ENCODE measurements at regions of chr9 and their contacts with region 1.

Region 1: DNA sequence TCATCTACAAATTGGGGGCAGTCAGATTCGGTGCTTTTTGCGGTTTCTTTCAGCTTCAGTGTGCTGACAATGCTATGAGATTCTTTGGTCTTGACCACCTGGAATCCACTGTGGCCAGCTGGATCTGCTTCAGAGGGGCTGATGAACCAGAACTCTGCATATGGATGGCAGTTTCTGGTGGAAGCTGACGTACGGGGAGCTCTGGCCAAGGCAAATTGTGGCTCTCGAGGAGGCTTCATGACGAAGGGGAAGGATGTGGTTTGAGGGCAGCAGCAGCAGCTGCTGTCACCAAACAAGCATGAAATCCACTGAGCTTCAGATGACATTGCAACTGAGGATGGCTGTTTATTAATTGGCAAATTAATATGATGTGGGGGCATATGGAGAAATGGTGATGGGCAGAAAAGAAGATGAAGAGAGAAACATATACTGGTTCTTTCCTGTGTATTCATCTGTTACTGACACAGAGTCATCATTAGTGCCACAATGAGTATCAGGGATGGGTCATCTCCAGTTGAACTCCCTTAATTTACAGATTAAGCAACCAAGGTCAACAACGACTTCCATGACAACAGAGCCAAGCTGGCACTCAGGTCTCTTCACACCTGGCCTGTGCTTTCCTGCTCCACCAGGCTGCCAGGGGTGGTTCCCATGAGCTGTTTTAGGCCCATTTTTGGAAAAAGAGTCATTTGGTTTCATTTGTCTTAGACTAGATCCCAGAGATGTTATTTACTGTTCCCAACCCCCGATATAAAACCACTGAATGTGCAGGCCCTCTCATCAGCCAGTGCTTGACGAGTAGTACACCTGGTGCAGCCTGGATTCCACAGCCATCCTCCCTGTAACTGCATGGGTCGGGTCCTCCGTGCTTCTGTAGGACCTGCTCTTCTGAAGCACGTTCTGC is 134.7 kb downstream of the AOPEP start:
- DNase-seq: peak in 1 of 10 donors; percentile 52
- H3K4me3 ChIP-seq: no peak overlapping the region
- H3K27ac ChIP-seq: peak overlapping the region in 17 of 59 donors; percentile 6 to 45 (median 34)
- H3K27me3 ChIP-seq: no peaks in the 10 kb centered on the region
- CTCF ChIP-seq: no peak

Region 2: GRCh38 chr9:94892675-94893074 is 31.5 kb after region 1 on chr9:
- intact Hi-C with region 1: loop called in 1 of 2 experiments (anchors 1 kb)
- DNase-seq: no peak
- H3K4me3 ChIP-seq: no peak overlapping the region
- H3K27ac ChIP-seq: no peak overlapping the region
- H3K27me3 ChIP-seq: no peaks in the 10 kb centered on the region
- CTCF ChIP-seq: no peak

Region 3: DNA sequence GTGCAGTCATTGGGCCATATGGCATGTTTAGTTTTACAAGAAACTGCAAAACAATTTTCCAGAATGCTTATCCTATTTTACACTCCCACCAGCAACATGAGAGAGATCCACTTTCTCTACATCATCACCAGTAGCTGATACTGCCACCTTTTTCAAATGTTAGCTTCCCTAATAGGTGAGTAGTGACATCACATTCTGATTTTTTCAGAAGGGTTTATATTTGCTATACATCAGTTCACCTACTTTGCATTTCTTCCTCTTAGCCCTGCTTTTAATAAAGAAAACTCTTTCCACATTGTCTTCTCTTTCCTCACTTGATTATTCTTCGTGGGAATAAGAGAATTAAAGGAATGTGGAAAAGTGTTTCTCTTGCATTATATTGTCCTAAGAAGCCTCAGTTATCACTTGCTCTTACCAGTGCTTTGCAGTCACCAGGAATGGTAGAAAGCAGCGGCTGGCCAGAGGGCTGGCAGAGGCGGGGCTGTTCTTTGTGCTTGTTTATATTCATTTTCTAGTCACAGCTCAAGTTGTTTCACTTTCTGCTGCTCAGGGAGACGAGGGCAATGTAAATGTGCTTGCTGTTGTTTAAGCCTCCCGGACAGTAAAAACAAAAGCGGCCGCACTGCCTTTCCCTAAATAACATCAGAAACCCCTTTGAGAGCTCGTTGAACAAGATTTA is 1275.9 kb after region 1 on chr9:
- intact Hi-C with region 1: no loop called
- DNase-seq: peak in 9 of 10 donors; percentile 53 to 87 (median 73)
- H3K4me3 ChIP-seq: peak overlapping the region in 50 of 59 donors; percentile 0 to 57 (median 32)
- H3K27ac ChIP-seq: peak overlapping the region; percentile 27 to 98 (median 87)
- H3K27me3 ChIP-seq: no peaks in the 10 kb centered on the region
- CTCF ChIP-seq: peak in 3 of 56 donors; percentile 12 to 29 (median 13)